ENCODE measurements at regions of chr2 and their contacts with region 1.

Region 1: GRCh38 chr2:16727256-16727655 is 61.6 kb upstream of the CYRIA start:
- DNase-seq: peak; percentile 23
- ATAC-seq: peak; percentile 54
- H3K4me3 ChIP-seq: no peak overlapping the region
- H3K27ac ChIP-seq: no peak overlapping the region
- H3K4me1 ChIP-seq: no peaks in the 10 kb centered on the region
- H3K27me3 ChIP-seq: no peaks in the 10 kb centered on the region
- CTCF ChIP-seq: peak; percentile 33
- POLR2A ChIP-seq: no peak
- RAD21 ChIP-seq: peak; percentile 54

Region 2: GRCh38 chr2:15636972-15637785 is 1090.1 kb before region 1 on chr2:
- CTCF ChIA-PET with region 1: no interaction called
- POLR2A ChIA-PET with region 1: no interaction called
- dilution Hi-C with region 1: no loop called
- in situ Hi-C with region 1: no loop called
- intact Hi-C with region 1: loop called (anchors 1 kb)
- DNase-seq: peak; percentile 68
- ATAC-seq: peak; percentile 88
- H3K4me3 ChIP-seq: no peak overlapping the region
- H3K27ac ChIP-seq: no peak overlapping the region
- H3K4me1 ChIP-seq: peaks cover 2% of the 10 kb centered on the region; the same call in 1 of the 2 replicates
- H3K27me3 ChIP-seq: no peaks in the 10 kb centered on the region
- CTCF ChIP-seq: peak; percentile 97
- POLR2A ChIP-seq: 0 out of 2 replicates have a peak, but pooled peaks have one; percentile 20
- RAD21 ChIP-seq: peak; percentile 94

Region 3: GRCh38 chr2:16525265-16525887 is 201.9 kb before region 1 on chr2:
- CTCF ChIA-PET with region 1: no interaction called
- POLR2A ChIA-PET with region 1: no interaction called
- dilution Hi-C with region 1: no loop called
- in situ Hi-C with region 1: no loop called
- intact Hi-C with region 1: no loop called
- DNase-seq: no peak
- ATAC-seq: no peak
- H3K4me3 ChIP-seq: no peak overlapping the region
- H3K27ac ChIP-seq: no peak overlapping the region
- H3K4me1 ChIP-seq: no peaks in the 10 kb centered on the region
- H3K27me3 ChIP-seq: no peaks in the 10 kb centered on the region
- CTCF ChIP-seq: peak; percentile 43
- POLR2A ChIP-seq: no peak
- RAD21 ChIP-seq: peak; percentile 47

Region 4: DNA sequence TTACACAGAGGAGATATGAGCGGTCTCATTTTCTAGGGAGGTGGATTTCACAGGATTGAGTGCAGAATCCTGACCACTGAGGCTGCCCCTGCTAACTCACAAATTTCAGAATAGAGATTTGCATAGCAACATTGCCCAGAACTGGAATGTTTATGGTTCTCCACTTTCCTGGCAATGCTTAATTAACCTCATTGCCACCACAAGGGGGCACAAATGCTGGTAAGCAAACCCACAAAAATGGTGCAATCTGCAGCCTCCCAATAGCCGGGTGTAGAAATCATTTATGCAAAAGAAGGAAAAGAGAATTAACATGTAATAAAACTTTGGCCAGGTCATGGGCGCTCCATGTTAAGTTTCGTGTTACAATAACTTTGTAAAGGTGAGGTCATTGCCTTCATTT is 174.0 kb before region 1 on chr2:
- CTCF ChIA-PET with region 1: no interaction called
- POLR2A ChIA-PET with region 1: no interaction called
- dilution Hi-C with region 1: no loop called
- in situ Hi-C with region 1: no loop called
- intact Hi-C with region 1: loop called (anchors 1 kb)
- DNase-seq: peak; percentile 33
- ATAC-seq: peak; percentile 64
- H3K4me3 ChIP-seq: no peak overlapping the region
- H3K27ac ChIP-seq: no peak overlapping the region
- H3K4me1 ChIP-seq: no peaks in the 10 kb centered on the region; the same call in 1 of the 2 replicates
- H3K27me3 ChIP-seq: no peaks in the 10 kb centered on the region
- CTCF ChIP-seq: peak; percentile 47
- POLR2A ChIP-seq: no peak
- RAD21 ChIP-seq: peak; percentile 32; the same call in 1 of the 2 replicates

Region 5: DNA sequence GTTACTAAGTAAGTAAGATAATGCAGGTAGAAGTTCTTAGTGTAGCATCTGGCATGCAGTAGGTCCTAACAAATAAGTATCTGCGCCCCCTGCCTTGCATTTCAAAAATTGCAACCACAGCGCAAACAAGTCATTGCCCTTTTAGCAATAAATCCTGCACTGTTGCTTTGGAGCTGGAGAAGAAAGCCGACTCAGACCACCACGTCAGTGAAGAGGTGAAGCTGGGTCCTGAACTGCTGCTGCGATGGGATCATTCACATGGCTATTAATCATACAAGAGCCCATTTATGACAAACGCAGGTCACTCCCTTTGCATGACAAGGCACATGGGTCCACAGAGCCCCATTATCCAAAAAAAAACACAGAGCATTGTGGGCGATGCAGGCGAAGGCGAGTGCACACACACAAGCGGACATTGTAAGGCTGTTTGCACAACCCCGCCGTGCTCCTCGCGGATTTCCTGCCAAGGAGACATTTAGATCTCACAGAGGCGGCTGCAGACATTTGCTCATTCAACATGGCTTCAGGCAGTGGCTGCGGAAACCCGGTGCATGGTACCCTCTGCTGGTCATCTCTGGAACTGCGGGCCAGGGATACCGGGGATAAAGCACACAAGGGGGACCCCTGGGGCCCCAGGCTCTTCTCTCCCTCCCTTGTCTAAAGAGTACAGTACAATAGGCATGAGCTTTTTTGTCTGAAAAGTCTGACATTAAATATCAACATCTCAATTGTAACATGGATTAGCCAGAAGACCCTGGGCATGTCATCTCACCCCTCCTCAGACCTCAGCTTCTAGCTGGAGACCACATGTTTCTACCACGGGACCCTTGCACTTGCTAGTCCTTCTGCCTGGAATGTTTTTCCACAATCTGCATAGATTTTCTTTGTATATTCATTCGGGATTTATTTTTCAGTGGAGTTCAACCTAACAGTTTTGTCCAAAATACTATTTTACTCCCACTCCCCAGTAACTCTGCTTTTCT is 118.3 kb before region 1 on chr2:
- CTCF ChIA-PET with region 1: no interaction called
- POLR2A ChIA-PET with region 1: no interaction called
- dilution Hi-C with region 1: no loop called
- in situ Hi-C with region 1: no loop called
- intact Hi-C with region 1: loop called (anchors 1 kb)
- DNase-seq: peak; percentile 68
- ATAC-seq: peak; percentile 96
- H3K4me3 ChIP-seq: peak overlapping the region; percentile 20
- H3K27ac ChIP-seq: no peak overlapping the region
- H3K4me1 ChIP-seq: no peaks in the 10 kb centered on the region; the same call in 1 of the 2 replicates
- H3K27me3 ChIP-seq: no peaks in the 10 kb centered on the region
- CTCF ChIP-seq: peak; percentile 92
- POLR2A ChIP-seq: no peak
- RAD21 ChIP-seq: peak; percentile 74

Region 6: DNA sequence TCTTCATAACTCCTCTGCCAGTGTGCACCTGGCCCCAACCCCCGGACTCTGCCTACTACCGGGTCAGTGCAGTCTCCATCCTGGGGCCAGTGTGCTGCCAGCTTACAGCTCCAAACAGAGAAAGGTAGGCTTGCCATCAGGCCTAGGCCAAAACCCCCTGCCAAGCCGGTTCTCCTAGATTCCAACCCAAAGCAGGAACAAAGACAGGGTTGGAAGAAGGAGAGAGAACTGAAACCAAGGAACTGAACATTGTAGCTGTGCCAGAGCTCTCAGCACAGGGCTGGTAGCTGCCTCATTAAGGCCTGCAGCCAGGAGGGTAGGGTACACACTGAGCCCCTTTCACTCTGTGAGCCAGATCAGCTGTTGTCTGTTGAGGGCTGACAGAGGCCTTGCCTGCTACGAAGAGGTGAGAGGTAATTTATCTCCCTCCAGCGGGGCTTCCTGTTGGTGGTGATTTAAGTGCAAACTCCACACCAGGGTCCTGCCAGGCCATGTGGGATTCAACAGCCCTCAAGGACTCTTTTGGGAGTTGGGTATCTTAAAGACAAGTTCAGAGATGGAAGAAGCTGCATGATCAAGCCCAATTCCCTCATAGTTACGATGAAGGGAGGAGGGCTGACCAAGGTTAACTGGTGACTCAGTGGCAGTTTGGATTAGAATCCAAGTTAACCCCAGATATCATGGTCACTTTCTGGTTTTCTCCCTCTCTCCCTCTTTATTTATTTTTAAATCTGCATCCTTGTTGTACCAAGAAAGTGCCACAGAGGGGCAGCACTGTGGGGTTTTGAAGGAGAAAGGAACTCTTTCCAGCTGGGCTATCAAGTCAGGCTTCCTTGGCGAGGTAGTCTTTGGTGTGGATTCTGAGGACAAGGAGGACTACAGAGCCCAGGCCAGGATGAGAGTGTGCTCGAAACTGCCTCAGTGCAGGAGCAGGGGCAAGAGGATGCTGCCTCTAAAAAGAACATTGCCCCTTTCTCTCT is 109.7 kb before region 1 on chr2:
- CTCF ChIA-PET with region 1: no interaction called
- POLR2A ChIA-PET with region 1: no interaction called
- dilution Hi-C with region 1: no loop called
- in situ Hi-C with region 1: no loop called
- intact Hi-C with region 1: loop called (anchors 1 kb)
- DNase-seq: peak; percentile 56
- ATAC-seq: peak; percentile 40
- H3K4me3 ChIP-seq: no peak overlapping the region
- H3K27ac ChIP-seq: no peak overlapping the region
- H3K4me1 ChIP-seq: peaks cover 21% of the 10 kb centered on the region
- H3K27me3 ChIP-seq: no peaks in the 10 kb centered on the region
- CTCF ChIP-seq: peak; percentile 67
- POLR2A ChIP-seq: no peak
- RAD21 ChIP-seq: peak; percentile 70

Region 7: DNA sequence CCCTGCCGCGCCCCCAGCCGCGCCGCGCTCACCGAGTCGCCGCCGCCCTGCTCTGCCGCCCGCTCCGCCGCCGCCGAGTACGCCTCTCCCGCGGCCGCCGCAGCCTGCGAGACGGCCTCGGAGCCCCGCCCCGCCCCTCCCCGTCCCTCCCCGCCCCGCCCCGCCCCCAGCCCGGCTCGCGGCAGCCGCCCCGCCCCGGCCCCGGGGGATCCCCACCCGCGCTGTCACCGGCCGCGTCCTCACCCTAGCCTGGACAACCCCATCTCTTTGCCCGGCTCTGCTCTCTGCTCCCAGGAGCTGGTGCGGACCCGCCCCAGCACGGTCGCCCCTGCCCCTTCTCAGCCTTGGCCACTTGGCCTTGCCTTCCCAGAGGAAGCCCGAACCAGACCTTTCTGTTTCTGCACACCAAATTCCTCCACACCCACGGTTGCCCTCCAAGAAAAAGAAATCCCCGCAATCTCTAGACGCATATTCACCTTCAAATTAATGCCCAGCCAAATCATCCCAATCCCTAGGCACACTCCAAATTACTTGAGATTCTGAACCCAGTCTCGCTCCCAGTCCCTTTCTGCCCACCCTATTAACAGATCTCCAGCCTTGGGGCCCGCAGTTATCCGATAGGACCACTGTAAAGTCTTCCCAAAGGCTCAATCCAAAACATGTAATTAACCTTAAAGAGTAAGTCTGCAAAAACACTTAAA is 61.4 kb before region 1 on chr2 and contains the start of gene CYRIA:
- CTCF ChIA-PET with region 1: no interaction called
- POLR2A ChIA-PET with region 1: no interaction called
- dilution Hi-C with region 1: no loop called
- in situ Hi-C with region 1: no loop called
- intact Hi-C with region 1: loop called (anchors 5 kb)
- DNase-seq: no peak
- ATAC-seq: peak; percentile 77
- H3K4me3 ChIP-seq: peak within 1 kb of the TSS; percentile 74
- H3K27ac ChIP-seq: peak within 1 kb of the TSS; percentile 4; the same call in 1 of the 2 replicates
- H3K4me1 ChIP-seq: peaks cover 20% of the 10 kb centered on the region; the same call in 1 of the 2 replicates
- H3K27me3 ChIP-seq: peaks cover 19% of the 10 kb centered on the region; the same call in 1 of the 2 replicates
- CTCF ChIP-seq: no peak
- POLR2A ChIP-seq: no peak
- RAD21 ChIP-seq: no peak
- total RNA-seq, gene CYRIA: 1.7 and 3.8 TPM in 2 replicates

Region 8: GRCh38 chr2:17226941-17227490 is 499.8 kb after region 1 on chr2:
- CTCF ChIA-PET with region 1: no interaction called
- POLR2A ChIA-PET with region 1: no interaction called
- dilution Hi-C with region 1: no loop called
- in situ Hi-C with region 1: no loop called
- intact Hi-C with region 1: no loop called
- DNase-seq: no peak
- ATAC-seq: no peak
- H3K4me3 ChIP-seq: no peak overlapping the region
- H3K27ac ChIP-seq: no peak overlapping the region
- H3K4me1 ChIP-seq: no peaks in the 10 kb centered on the region
- H3K27me3 ChIP-seq: no peaks in the 10 kb centered on the region
- CTCF ChIP-seq: no peak
- POLR2A ChIP-seq: no peak
- RAD21 ChIP-seq: no peak

Measured in IMR-90 (cell line).